IMR-90 (cell line): ENCODE measurements at regions of chr3 and their contacts with region 1.

Region 1: DNA sequence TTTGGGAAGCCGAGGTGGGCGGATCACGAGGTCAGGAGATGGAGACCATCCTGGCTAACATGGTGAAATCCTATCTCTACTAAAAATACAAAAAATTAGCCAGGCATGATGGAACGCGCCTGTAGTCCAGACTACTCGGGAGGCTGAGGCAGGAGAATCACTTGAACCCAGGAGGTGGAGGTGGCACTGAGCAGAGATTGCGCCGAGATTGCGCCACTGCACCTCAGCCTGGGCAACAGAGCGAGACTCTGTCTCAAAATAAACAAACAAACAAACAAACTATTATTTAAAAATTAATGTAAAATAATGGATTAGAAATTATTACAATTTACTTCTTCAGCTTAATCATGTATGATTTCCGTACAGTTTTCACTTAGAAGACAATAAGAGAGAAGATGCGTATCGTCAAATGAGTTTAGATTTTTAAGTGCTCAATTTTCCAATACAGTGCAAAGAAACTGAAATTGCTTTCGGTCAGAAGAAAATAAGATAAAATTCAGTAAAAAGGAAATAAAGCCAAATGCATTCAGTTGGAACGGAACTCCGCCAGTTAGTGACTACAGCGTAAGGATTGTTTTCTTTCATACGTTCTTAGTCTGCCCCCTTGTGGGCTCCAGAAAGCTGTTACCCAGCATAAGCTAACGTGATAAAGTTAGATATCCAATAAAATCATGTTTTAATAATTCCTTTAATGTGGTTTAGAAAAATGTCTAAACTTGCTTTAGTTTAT is 24.8 kb downstream of the AADAC start:
- DNase-seq: peak; percentile 88
- ATAC-seq: peak; percentile 74
- H3K4me3 ChIP-seq: no peak overlapping the region
- H3K27ac ChIP-seq: no peak overlapping the region
- H3K4me1 ChIP-seq: peaks cover 10% of the 10 kb centered on the region
- H3K27me3 ChIP-seq: no peaks in the 10 kb centered on the region
- CTCF ChIP-seq: peak; percentile 89
- POLR2A ChIP-seq: no peak
- RAD21 ChIP-seq: peak; percentile 87

Region 2: GRCh38 chr3:151290673-151291072 is 548.1 kb before region 1 on chr3:
- CTCF ChIA-PET with region 1: interaction called, 7 read pairs
- POLR2A ChIA-PET with region 1: no interaction called
- dilution Hi-C with region 1: no loop called
- in situ Hi-C with region 1: loop called (anchors 10 kb)
- intact Hi-C with region 1: loop called (anchors 1 kb)
- DNase-seq: peak; percentile 66
- ATAC-seq: peak; percentile 72
- H3K4me3 ChIP-seq: no peak overlapping the region
- H3K27ac ChIP-seq: no peak overlapping the region
- H3K4me1 ChIP-seq: no peaks in the 10 kb centered on the region
- H3K27me3 ChIP-seq: no peaks in the 10 kb centered on the region
- CTCF ChIP-seq: peak; percentile 87
- POLR2A ChIP-seq: no peak
- RAD21 ChIP-seq: peak; percentile 93

Region 3: GRCh38 chr3:151660885-151661284 is 177.9 kb before region 1 on chr3:
- CTCF ChIA-PET with region 1: no interaction called
- POLR2A ChIA-PET with region 1: no interaction called
- dilution Hi-C with region 1: no loop called
- in situ Hi-C with region 1: no loop called
- intact Hi-C with region 1: loop called (anchors 5 kb)
- DNase-seq: no peak
- ATAC-seq: no peak
- H3K4me3 ChIP-seq: no peak overlapping the region
- H3K27ac ChIP-seq: no peak overlapping the region
- H3K4me1 ChIP-seq: no peaks in the 10 kb centered on the region
- H3K27me3 ChIP-seq: no peaks in the 10 kb centered on the region; the same call in 1 of the 2 replicates
- CTCF ChIP-seq: 0 out of 2 replicates have a peak, but pooled peaks have one; percentile 22
- POLR2A ChIP-seq: no peak
- RAD21 ChIP-seq: no peak

Region 4: GRCh38 chr3:151918253-151919029 is 79.7 kb after region 1 on chr3:
- CTCF ChIA-PET with region 1: no interaction called
- POLR2A ChIA-PET with region 1: no interaction called
- dilution Hi-C with region 1: no loop called
- in situ Hi-C with region 1: no loop called
- intact Hi-C with region 1: loop called (anchors 1 kb)
- DNase-seq: peak; percentile 75
- ATAC-seq: peak; percentile 87
- H3K4me3 ChIP-seq: no peak overlapping the region
- H3K27ac ChIP-seq: no peak overlapping the region
- H3K4me1 ChIP-seq: no peaks in the 10 kb centered on the region
- H3K27me3 ChIP-seq: no peaks in the 10 kb centered on the region
- CTCF ChIP-seq: peak; percentile 84
- POLR2A ChIP-seq: no peak
- RAD21 ChIP-seq: peak; percentile 89

Region 5: GRCh38 chr3:153069598-153070510 is 1231.1 kb after region 1 on chr3:
- CTCF ChIA-PET with region 1: no interaction called
- POLR2A ChIA-PET with region 1: no interaction called
- dilution Hi-C with region 1: no loop called
- in situ Hi-C with region 1: no loop called
- intact Hi-C with region 1: no loop called
- DNase-seq: peak; percentile 78
- ATAC-seq: peak; percentile 63
- H3K4me3 ChIP-seq: no peak overlapping the region
- H3K27ac ChIP-seq: no peak overlapping the region
- H3K4me1 ChIP-seq: no peaks in the 10 kb centered on the region
- H3K27me3 ChIP-seq: no peaks in the 10 kb centered on the region
- CTCF ChIP-seq: no peak
- POLR2A ChIP-seq: no peak
- RAD21 ChIP-seq: no peak